IMR-90 (cell line): ENCODE measurements at regions of chr15 and their contacts with region 1.

Region 1: DNA sequence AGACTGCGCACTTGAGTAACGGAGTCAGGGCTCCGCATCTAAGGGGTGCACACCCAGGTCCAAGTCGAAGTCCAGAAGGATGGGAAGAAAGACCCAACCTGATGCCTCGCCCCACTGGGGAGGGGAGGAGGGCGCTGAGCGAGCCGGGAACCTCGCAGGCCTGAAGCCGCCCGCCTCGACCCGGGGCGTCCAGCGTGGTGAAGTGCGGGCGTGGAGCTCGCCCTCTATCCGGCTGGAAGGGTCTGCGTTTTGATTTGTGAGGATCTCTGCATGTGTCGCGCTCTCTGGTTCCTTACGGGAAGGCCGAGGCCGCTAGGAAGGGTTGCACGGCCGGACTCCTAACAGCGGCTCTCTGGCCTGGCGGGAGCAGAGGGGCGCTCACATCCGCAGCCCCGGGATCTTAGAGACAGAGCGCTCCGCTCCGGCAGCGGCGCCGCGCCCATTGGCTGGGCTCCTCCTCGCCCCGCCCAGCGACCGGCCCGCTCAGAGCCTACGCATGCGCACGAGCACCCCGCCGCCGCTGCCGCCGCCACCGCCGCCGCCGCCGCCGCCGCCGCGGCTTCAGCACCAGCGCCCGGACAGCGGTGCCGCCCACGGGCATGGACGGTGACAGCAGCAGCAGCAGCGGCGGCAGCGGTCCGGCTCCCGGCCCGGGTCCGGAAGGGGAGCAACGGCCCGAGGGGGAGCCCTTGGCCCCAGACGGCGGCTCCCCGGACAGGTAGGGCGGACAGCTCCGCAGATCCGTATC is at the start of gene DISP2:
- DNase-seq: peak; percentile 67
- ATAC-seq: peak; percentile 96
- H3K4me3 ChIP-seq: peak within 1 kb of the TSS; percentile 63
- H3K27ac ChIP-seq: no peak within 1 kb of the TSS; the same call in 1 of the 2 replicates
- H3K4me1 ChIP-seq: peaks cover 6% of the 10 kb centered on the region; the same call in 1 of the 2 replicates
- H3K27me3 ChIP-seq: peaks cover 26% of the 10 kb centered on the region
- CTCF ChIP-seq: no peak
- POLR2A ChIP-seq: no peak
- RAD21 ChIP-seq: no peak
- total RNA-seq, gene DISP2: under 0.01 and 0.36 TPM in 2 replicates

Region 2: GRCh38 chr15:39852250-39852649 is 505.6 kb before region 1 on chr15:
- CTCF ChIA-PET with region 1: no interaction called
- POLR2A ChIA-PET with region 1: no interaction called
- dilution Hi-C with region 1: no loop called
- in situ Hi-C with region 1: no loop called
- intact Hi-C with region 1: no loop called
- DNase-seq: peak; percentile 74
- ATAC-seq: peak; percentile 63
- H3K4me3 ChIP-seq: no peak overlapping the region
- H3K27ac ChIP-seq: no peak overlapping the region; the same call in 1 of the 2 replicates
- H3K4me1 ChIP-seq: peaks cover 17% of the 10 kb centered on the region
- H3K27me3 ChIP-seq: no peaks in the 10 kb centered on the region
- CTCF ChIP-seq: no peak
- POLR2A ChIP-seq: no peak
- RAD21 ChIP-seq: no peak

Region 3: GRCh38 chr15:40274350-40275274 is 83.3 kb before region 1 on chr15:
- CTCF ChIA-PET with region 1: no interaction called
- POLR2A ChIA-PET with region 1: no interaction called
- dilution Hi-C with region 1: no loop called
- in situ Hi-C with region 1: no loop called
- intact Hi-C with region 1: no loop called
- DNase-seq: peak; percentile 78
- ATAC-seq: peak; percentile 86
- H3K4me3 ChIP-seq: no peak overlapping the region
- H3K27ac ChIP-seq: no peak overlapping the region
- H3K4me1 ChIP-seq: no peaks in the 10 kb centered on the region
- H3K27me3 ChIP-seq: peaks cover 21% of the 10 kb centered on the region
- CTCF ChIP-seq: peak; percentile 100; the same call in 1 of the 2 replicates
- POLR2A ChIP-seq: no peak
- RAD21 ChIP-seq: peak; percentile 98

Region 4: GRCh38 chr15:40338041-40338657 is 19.7 kb before region 1 on chr15:
- CTCF ChIA-PET with region 1: interaction called, 15 read pairs
- POLR2A ChIA-PET with region 1: interaction called, 5 read pairs
- dilution Hi-C with region 1: no loop called
- in situ Hi-C with region 1: no loop called
- intact Hi-C with region 1: loop called (anchors 2 kb)
- DNase-seq: peak; percentile 60
- ATAC-seq: peak; percentile 8; the same call in 1 of the 2 replicates
- H3K4me3 ChIP-seq: no peak overlapping the region
- H3K27ac ChIP-seq: peak overlapping the region; percentile 97
- H3K4me1 ChIP-seq: peaks cover 36% of the 10 kb centered on the region
- H3K27me3 ChIP-seq: no peaks in the 10 kb centered on the region
- CTCF ChIP-seq: peak; percentile 69
- POLR2A ChIP-seq: no peak
- RAD21 ChIP-seq: peak; percentile 76

Region 5: DNA sequence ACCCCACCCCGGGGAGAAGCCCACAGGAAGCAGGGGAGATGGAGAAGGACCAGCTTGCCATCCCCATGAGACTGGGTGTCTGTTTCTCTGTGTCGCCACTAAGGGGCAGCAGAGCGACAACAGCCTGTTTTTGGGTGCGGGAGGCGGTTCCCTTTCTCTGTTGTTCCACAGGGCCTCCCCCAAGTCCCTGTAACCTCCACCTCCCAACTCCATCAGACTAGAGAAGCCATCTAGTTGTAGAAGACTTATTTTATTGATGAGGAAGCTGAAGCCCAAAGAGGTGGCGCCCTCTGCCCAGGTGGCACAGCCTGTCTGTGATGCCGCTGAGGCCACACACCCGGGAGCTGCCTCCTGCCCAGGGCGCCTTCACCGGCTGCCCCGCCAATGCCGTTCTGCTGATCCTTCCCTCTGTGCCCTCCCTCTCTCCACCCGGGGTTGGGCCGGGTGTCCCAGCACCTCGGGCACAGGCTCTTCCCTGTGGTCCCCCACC is 13.2 kb before region 1 on chr15:
- CTCF ChIA-PET with region 1: interaction called, 15 read pairs
- POLR2A ChIA-PET with region 1: interaction called, 3 read pairs
- dilution Hi-C with region 1: no loop called
- in situ Hi-C with region 1: no loop called
- intact Hi-C with region 1: loop called (anchors 2 kb)
- DNase-seq: peak; percentile 69
- ATAC-seq: peak; percentile 18
- H3K4me3 ChIP-seq: no peak overlapping the region
- H3K27ac ChIP-seq: peak overlapping the region; percentile 85; the same call in 1 of the 2 replicates
- H3K4me1 ChIP-seq: peaks cover 24% of the 10 kb centered on the region
- H3K27me3 ChIP-seq: no peaks in the 10 kb centered on the region
- CTCF ChIP-seq: peak; percentile 80
- POLR2A ChIP-seq: no peak
- RAD21 ChIP-seq: peak; percentile 71

Region 6: DNA sequence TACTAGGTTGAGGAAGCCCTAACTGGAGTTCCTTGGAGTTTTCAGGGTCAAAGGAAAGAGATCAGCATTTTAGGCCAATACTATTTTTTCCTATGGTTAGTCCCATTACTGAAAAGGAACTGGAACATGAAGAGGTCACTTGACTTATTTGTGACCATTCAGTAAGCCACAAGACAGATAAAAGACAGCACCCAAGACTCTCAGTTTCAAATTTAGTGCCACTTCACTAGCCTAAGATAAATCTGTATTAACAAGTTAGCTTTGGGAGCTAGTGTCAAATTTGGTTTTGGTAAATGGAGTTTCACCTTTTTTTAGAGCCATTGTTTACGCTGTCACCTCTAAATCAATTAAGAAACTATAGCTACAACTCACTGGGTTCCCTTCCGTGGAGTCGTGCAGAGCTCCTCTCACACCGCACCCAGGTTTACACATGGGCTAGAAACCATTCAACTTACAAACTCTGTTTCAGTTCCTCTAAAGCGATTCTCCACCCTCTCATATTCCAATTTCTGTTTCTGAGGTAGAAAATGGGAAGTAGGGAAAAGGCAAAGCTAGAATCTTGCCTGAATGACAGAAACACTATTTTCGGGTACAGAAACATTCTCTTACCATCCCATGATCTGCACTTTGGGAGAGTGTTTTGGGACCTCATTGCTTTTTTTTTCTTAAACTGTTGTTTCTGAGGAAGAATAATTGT is 192.6 kb after region 1 on chr15:
- CTCF ChIA-PET with region 1: no interaction called
- POLR2A ChIA-PET with region 1: no interaction called
- dilution Hi-C with region 1: no loop called
- in situ Hi-C with region 1: no loop called
- intact Hi-C with region 1: no loop called
- DNase-seq: no peak
- ATAC-seq: no peak
- H3K4me3 ChIP-seq: no peak overlapping the region
- H3K27ac ChIP-seq: no peak overlapping the region
- H3K4me1 ChIP-seq: no peaks in the 10 kb centered on the region
- H3K27me3 ChIP-seq: no peaks in the 10 kb centered on the region
- CTCF ChIP-seq: no peak
- POLR2A ChIP-seq: no peak
- RAD21 ChIP-seq: no peak